ENCODE measurements at regions of chr7 and their contacts with region 1.

Region 1: GRCh38 chr7:45917658-45918057 is 3.4 kb downstream of the IGFBP3 start:
- DNase-seq: peak; percentile 69
- H3K4me3 ChIP-seq: no peak overlapping the region
- H3K27ac ChIP-seq: no peak overlapping the region
- H3K4me1 ChIP-seq: peaks cover 24% of the 10 kb centered on the region
- H3K27me3 ChIP-seq: peaks cover 22 to 37% of the 10 kb centered on the region in 2 experiments
- CTCF ChIP-seq: peak; percentile 87 to 93
- POLR2A ChIP-seq: no peak

Region 2: GRCh38 chr7:45872116-45873034 is 45.3 kb before region 1 on chr7:
- CTCF ChIA-PET with region 1: interaction called, 8 read pairs
- POLR2A ChIA-PET with region 1: no interaction called
- dilution Hi-C with region 1: no loop called
- intact Hi-C with region 1: loop called (anchors 1 kb)
- DNase-seq: no peak
- H3K4me3 ChIP-seq: no peak overlapping the region
- H3K27ac ChIP-seq: no peak overlapping the region
- H3K4me1 ChIP-seq: peaks cover 15% of the 10 kb centered on the region
- H3K27me3 ChIP-seq: no peaks in the 10 kb centered on the region
- CTCF ChIP-seq: peak; percentile 67 to 71
- POLR2A ChIP-seq: no peak

Region 3: GRCh38 chr7:46032984-46033383 is 115.3 kb after region 1 on chr7:
- CTCF ChIA-PET with region 1: no interaction called
- POLR2A ChIA-PET with region 1: no interaction called
- dilution Hi-C with region 1: no loop called
- intact Hi-C with region 1: no loop called
- DNase-seq: no peak
- H3K4me3 ChIP-seq: no peak overlapping the region
- H3K27ac ChIP-seq: no peak overlapping the region
- H3K4me1 ChIP-seq: no peaks in the 10 kb centered on the region
- H3K27me3 ChIP-seq: no peaks in the 10 kb centered on the region
- CTCF ChIP-seq: no peak
- POLR2A ChIP-seq: no peak

Region 4: GRCh38 chr7:47100817-47101435 is 1183.3 kb after region 1 on chr7:
- CTCF ChIA-PET with region 1: interaction called, 99 read pairs
- POLR2A ChIA-PET with region 1: no interaction called
- dilution Hi-C with region 1: no loop called
- intact Hi-C with region 1: loop called (anchors 1 kb)
- DNase-seq: peak; percentile 73
- H3K4me3 ChIP-seq: no peak overlapping the region
- H3K27ac ChIP-seq: no peak overlapping the region
- H3K4me1 ChIP-seq: no peaks in the 10 kb centered on the region
- H3K27me3 ChIP-seq: no peaks in the 10 kb centered on the region
- CTCF ChIP-seq: peak; percentile 69 to 79
- POLR2A ChIP-seq: no peak

Region 5: DNA sequence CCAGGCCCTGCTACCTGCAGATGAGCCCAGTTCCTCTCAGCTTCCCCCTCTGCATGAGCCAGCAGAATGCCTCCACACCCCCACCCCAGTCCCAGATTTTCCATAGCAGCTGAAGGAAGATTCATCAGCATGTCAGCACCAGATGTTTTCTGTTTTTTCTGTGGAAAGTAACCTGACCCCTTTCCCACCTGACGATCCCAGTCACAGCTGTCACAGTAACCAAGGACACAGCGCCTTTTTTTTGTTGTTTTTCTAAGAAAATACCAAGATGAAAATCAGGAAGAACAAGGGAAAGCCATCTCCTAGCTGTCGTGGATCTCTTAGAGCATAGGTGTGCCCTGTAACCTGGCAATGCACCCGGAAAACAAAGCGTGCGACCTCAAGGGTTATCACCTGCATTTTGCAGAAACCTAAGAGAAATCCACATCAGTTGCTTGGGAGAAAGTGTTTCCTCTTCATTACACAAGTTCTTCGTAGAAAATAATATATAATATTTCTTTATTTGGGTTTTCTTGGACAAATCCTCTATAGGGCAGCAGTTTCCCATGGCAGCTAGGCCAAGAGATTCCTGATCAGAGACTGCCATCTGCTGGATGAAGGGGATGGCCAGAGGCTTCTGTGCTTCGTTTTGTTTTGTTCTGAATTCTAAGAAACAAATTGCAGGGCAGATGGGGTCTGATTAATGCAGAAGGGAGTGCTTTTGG is 1262.3 kb after region 1 on chr7:
- CTCF ChIA-PET with region 1: interaction called, 149 read pairs
- POLR2A ChIA-PET with region 1: no interaction called
- dilution Hi-C with region 1: no loop called
- intact Hi-C with region 1: loop called (anchors 1 kb)
- DNase-seq: peak; percentile 51
- H3K4me3 ChIP-seq: no peak overlapping the region
- H3K27ac ChIP-seq: no peak overlapping the region
- H3K4me1 ChIP-seq: no peaks in the 10 kb centered on the region
- H3K27me3 ChIP-seq: peaks cover 0 to 2% of the 10 kb centered on the region in 2 experiments
- CTCF ChIP-seq: peak; percentile 69 to 74
- POLR2A ChIP-seq: no peak

Region 6: GRCh38 chr7:47254081-47255006 is 1336.7 kb after region 1 on chr7:
- CTCF ChIA-PET with region 1: interaction called, 24 read pairs
- POLR2A ChIA-PET with region 1: no interaction called
- dilution Hi-C with region 1: no loop called
- intact Hi-C with region 1: loop called (anchors 1 kb)
- DNase-seq: peak; percentile 55
- H3K4me3 ChIP-seq: peak overlapping the region; percentile 59 to 69 (median 68)
- H3K27ac ChIP-seq: peak overlapping the region; percentile 58
- H3K4me1 ChIP-seq: peaks cover 15% of the 10 kb centered on the region
- H3K27me3 ChIP-seq: peaks cover 0 to 1% of the 10 kb centered on the region in 2 experiments
- CTCF ChIP-seq: peak; percentile 64 to 90
- POLR2A ChIP-seq: no peak